CD14-positive monocyte (primary cell): ENCODE measurements at regions of chr5 and their contacts with region 1.

Region 1: DNA sequence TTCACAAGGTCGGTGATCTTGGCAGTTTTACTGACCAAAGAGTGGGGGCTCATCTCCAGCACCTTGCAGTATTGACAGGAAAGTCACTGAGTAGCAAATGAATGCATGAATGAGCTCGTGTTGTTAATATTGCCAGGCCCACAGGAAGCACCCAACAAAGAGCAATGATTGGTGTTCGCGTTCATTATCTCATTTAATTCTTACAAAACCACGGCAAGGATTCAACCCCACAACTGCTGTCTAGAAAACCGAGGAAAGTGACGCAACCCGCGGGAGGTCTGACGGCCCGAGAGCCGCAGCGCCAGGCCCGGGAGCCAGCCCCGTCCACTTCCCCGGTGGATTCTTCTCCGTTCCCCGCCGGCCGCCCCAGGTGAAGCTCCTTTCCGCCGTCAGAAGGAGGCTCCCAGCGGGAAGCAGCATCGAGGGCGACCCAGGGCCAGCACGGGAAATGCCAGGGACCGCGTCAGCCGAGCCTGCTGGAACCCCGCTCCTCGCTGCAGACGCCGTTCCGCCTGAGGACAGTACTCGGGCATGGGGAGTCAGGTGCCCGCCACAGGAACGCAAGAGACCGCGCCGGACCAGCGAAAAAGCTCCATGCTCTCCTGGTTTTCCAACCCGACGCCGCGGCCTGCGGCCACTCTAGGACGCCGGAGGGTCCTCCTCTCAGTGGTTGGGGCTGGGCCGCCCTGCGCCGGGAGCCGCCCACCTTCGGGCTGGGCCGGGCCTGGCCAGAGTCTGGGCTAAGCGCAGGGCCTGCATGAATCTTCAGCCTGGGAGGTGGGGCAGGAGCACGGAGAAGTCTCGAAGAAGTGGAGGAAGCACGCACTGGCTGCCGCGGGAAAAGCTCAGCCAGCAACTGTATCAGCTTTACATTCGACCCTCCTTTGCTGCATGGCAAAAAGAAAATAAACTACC is 19.8 kb upstream of the FER start:
- DNase-seq: peak; percentile 69 to 80 (median 74)
- H3K4me3 ChIP-seq: peak overlapping the region; percentile 75 to 87 (median 86)
- H3K4me3 Mint-ChIP-seq: peak overlapping the region; percentile 90 to 92
- H3K27ac ChIP-seq: peak overlapping the region; percentile 94 to 95
- H3K27ac Mint-ChIP-seq: peak overlapping the region; percentile 90 to 97 (median 94)
- H3K4me1 ChIP-seq: peaks cover 33 to 51% of the 10 kb centered on the region in 2 donors
- H3K4me1 Mint-ChIP-seq: peaks cover 48% of the 10 kb centered on the region
- H3K27me3 ChIP-seq: no peaks in the 10 kb centered on the region
- H3K27me3 Mint-ChIP-seq: no peaks in the 10 kb centered on the region
- CTCF ChIP-seq: no peak

Region 2: GRCh38 chr5:108858959-108859358 is 131.1 kb after region 1 on chr5:
- intact Hi-C with region 1: loop called in 1 of 2 experiments (anchors 10 kb)
- DNase-seq: peak; percentile 74 to 90 (median 80)
- H3K4me3 ChIP-seq: peak overlapping the region in 1 of 3 experiments; percentile 22
- H3K4me3 Mint-ChIP-seq: peak overlapping the region in 1 of 2 donors; percentile 53
- H3K27ac ChIP-seq: peak overlapping the region in 1 of 2 donors; percentile 46
- H3K27ac Mint-ChIP-seq: peak overlapping the region; percentile 77 to 92 (median 89)
- H3K4me1 ChIP-seq: peaks cover 15 to 24% of the 10 kb centered on the region in 2 donors
- H3K4me1 Mint-ChIP-seq: peaks cover 19% of the 10 kb centered on the region
- H3K27me3 ChIP-seq: no peaks in the 10 kb centered on the region
- H3K27me3 Mint-ChIP-seq: peaks cover 0 to 2% (median 0%) of the 10 kb centered on the region in 3 donors
- CTCF ChIP-seq: no peak

Region 3: GRCh38 chr5:108876451-108876850 is 148.5 kb after region 1 on chr5:
- intact Hi-C with region 1: no loop called
- DNase-seq: no peak
- H3K4me3 ChIP-seq: no peak overlapping the region
- H3K4me3 Mint-ChIP-seq: no peak overlapping the region
- H3K27ac ChIP-seq: no peak overlapping the region
- H3K27ac Mint-ChIP-seq: no peak overlapping the region
- H3K4me1 ChIP-seq: no peaks in the 10 kb centered on the region
- H3K4me1 Mint-ChIP-seq: no peaks in the 10 kb centered on the region
- H3K27me3 ChIP-seq: no peaks in the 10 kb centered on the region
- H3K27me3 Mint-ChIP-seq: peaks cover 0 to 2% (median 0%) of the 10 kb centered on the region in 3 donors
- CTCF ChIP-seq: no peak

Region 4: GRCh38 chr5:109455598-109456096 is 727.7 kb after region 1 on chr5:
- intact Hi-C with region 1: loop called in 1 of 2 experiments (anchors 10 kb)
- DNase-seq: peak in 1 of 3 donors; percentile 17
- H3K4me3 ChIP-seq: no peak overlapping the region
- H3K4me3 Mint-ChIP-seq: no peak overlapping the region
- H3K27ac ChIP-seq: no peak overlapping the region
- H3K27ac Mint-ChIP-seq: no peak overlapping the region
- H3K4me1 ChIP-seq: peaks cover under 1 to 2% of the 10 kb centered on the region in 2 donors
- H3K4me1 Mint-ChIP-seq: peaks cover 3% of the 10 kb centered on the region
- H3K27me3 ChIP-seq: no peaks in the 10 kb centered on the region
- H3K27me3 Mint-ChIP-seq: peaks cover 0 to 3% (median 2%) of the 10 kb centered on the region in 3 donors
- CTCF ChIP-seq: no peak